Activated CD4-positive, alpha-beta T cell treated with anti-CD3 and anti-CD28 coated beads, Interleukin-2, amount 10 ng/mL, durations not matched to agents 24 days and 14 days (primary cell): ENCODE measurements at regions of chr2 and their contacts with region 1.

Region 1: DNA sequence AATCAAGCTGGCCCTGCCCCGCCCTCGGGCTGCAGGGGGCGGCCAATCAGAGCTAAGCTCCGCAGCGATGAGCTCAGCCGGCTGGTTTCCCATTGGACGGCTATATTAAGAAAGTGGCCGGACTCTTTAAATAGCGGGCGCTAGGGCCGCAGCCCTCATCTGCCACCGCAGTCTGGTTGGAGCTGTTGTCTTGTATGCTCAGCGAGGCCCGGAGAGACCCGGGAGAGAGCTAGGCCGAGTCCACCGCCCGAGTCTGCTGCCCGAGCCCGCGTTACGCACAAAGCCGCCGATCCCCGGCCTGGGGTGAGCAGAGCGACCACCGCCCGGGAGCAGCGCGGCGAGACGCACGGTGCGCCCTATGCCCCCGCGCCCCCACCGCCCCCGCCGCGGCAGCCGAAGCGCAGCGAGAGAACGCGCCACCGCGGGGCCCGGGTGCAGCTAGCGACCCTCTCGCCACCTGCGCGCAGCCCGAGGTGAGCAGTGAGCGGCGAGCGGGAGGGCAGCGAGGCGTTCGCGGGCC is at the start of gene RHOB:
- DNase-seq: peak; percentile 96
- H3K4me3 Mint-ChIP-seq: peak within 1 kb of the TSS; percentile 77
- H3K27ac Mint-ChIP-seq: peak within 1 kb of the TSS; percentile 74
- H3K4me1 Mint-ChIP-seq: peaks cover 6% of the 10 kb centered on the region
- H3K27me3 Mint-ChIP-seq: peaks cover 57% of the 10 kb centered on the region
- total RNA-seq, gene RHOB: 16.4 and 18.5 TPM in 2 replicates

Region 2: GRCh38 chr2:19347619-19348562 is 1099.1 kb before region 1 on chr2:
- intact Hi-C with region 1: loop called (anchors 5 kb)
- DNase-seq: peak; percentile 100
- H3K4me3 Mint-ChIP-seq: peak overlapping the region; percentile 93
- H3K27ac Mint-ChIP-seq: peak overlapping the region; percentile 99
- H3K4me1 Mint-ChIP-seq: peaks cover 20% of the 10 kb centered on the region
- H3K27me3 Mint-ChIP-seq: peaks cover 33% of the 10 kb centered on the region

Region 3: DNA sequence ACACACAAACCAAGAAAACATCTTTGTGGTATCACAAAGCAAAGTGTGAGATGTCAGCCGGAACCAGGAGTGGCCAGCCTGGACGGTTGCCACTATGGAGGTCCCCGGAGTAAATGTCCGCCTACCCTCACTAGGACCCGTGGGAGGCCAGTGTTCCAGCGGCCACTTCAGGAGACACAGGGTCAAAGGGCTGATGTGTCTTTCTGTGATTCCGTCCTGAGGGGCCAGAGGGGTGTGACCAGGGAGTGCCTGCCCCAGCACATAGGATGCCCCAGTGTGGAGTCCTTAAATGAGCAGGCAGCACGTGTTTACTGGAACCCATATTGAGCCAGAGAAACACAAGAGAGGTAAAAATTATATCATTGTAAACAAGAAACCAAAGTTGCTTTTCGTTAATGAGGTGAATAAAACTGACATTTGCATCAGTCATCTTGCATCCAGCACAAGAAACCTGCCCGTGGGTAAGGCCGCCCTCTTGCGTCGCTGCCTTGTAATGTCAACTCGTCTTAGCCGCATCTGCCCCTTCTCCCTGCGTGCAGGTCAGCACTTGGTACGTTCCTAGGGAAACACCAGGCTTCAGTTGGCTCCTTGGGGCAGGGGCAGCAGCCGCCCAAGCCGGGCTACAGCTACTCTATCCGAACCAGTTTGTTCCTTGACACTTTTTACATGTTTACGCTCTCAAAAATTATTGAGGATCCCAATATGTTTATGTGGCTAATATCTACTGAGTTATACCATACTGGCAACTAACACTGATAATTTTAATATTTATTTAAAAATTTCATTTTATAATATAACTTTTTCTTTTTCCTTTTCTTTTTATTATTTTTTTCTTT is 348.9 kb before region 1 on chr2:
- intact Hi-C with region 1: no loop called
- DNase-seq: peak; percentile 91
- H3K4me3 Mint-ChIP-seq: no peak overlapping the region
- H3K27ac Mint-ChIP-seq: no peak overlapping the region
- H3K4me1 Mint-ChIP-seq: peaks cover 5% of the 10 kb centered on the region
- H3K27me3 Mint-ChIP-seq: peaks cover 14% of the 10 kb centered on the region

Region 4: DNA sequence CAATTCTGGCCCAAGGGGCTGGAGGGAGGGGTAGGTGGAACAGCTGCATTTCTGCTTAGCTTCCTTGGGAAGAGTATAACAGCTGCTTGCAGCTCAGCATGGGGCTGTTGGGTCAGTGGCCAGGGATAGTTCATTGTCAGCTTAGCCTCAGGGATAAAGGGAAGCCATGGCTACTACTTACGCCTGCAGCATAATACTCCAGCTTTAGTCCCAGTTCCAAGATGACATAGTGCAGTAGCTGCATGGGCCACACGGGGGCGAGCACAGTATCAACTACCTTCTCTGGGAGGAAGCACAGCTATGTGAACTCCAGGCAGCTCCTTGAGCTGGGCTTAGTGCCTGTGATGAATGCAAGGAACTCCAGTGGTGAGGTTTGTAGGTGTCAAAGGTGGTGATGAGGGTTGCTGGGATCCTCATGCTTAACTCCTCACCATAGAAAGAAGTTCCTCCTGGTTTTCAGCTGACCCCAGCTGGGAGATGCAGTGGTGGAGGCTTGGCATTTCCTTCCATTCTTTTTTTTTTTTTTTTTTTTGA is 35.5 kb before region 1 on chr2:
- intact Hi-C with region 1: loop called (anchors 2 kb)
- DNase-seq: peak; percentile 92
- H3K4me3 Mint-ChIP-seq: no peak overlapping the region
- H3K27ac Mint-ChIP-seq: no peak overlapping the region
- H3K4me1 Mint-ChIP-seq: no peaks in the 10 kb centered on the region
- H3K27me3 Mint-ChIP-seq: peaks cover 33% of the 10 kb centered on the region

Region 5: DNA sequence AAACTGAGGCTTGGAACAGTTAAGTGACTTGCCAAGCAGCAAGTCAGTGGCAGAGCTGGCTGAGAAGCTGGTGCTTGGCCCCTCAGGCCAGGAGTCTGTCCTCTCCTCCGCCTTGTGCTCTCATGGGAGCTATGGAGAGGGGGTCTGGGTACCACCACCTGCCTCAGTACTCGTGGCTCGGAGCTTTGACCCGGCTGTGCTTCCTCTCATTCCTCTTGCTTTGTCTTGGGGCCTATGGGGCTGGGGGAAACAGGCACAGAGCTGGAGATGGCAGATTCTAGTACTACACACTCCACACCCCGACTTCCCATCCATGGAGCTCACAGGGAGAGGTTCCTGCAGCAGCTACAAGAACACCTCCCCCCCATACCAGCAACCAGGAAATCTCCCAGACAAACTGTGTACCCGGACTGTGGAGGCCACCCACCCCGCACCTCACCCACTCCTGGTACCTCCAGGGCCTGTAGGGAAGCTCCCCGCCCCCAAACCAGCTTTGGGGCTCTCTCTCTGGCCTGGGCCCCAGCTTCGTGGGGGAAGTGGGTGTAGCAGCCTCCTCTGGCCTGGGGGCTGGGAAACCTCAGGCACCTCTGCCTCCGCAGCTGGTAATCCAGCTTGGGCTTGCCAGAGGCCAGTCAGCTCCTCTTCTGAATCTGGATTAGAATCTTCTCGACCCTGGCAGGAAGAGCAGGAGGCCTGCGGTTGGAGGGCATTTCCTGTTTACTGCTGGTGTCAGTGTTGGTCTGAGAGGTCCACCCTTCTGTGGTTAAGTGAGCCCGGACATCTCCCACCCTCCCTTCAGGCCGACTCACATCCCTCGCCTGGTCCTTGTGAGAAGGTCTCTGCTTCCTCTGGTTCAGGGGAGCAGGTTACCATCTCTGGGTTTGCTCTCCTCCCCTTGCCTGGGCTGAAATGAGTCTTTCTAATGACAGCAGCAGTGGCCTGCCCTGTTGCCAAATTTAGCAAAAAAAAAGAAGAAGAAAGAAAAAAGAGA is 22.4 kb before region 1 on chr2:
- intact Hi-C with region 1: no loop called
- DNase-seq: peak; percentile 75
- H3K4me3 Mint-ChIP-seq: peak overlapping the region; percentile 7
- H3K27ac Mint-ChIP-seq: peak overlapping the region; percentile 76
- H3K4me1 Mint-ChIP-seq: peaks cover 30% of the 10 kb centered on the region
- H3K27me3 Mint-ChIP-seq: peaks cover 4% of the 10 kb centered on the region

Region 6: GRCh38 chr2:20642055-20642971 is 195.3 kb after region 1 on chr2:
- intact Hi-C with region 1: loop called (anchors 1 kb)
- DNase-seq: peak; percentile 92
- H3K4me3 Mint-ChIP-seq: no peak overlapping the region
- H3K27ac Mint-ChIP-seq: no peak overlapping the region
- H3K4me1 Mint-ChIP-seq: no peaks in the 10 kb centered on the region
- H3K27me3 Mint-ChIP-seq: no peaks in the 10 kb centered on the region

Region 7: GRCh38 chr2:20822535-20823490 is 375.8 kb after region 1 on chr2 and contains the start of gene LDAH:
- intact Hi-C with region 1: loop called (anchors 10 kb)
- DNase-seq: peak; percentile 95
- H3K4me3 Mint-ChIP-seq: peak within 1 kb of the TSS; percentile 96
- H3K27ac Mint-ChIP-seq: peak within 1 kb of the TSS; percentile 99
- H3K4me1 Mint-ChIP-seq: peaks cover 25% of the 10 kb centered on the region
- H3K27me3 Mint-ChIP-seq: peaks cover 4% of the 10 kb centered on the region
- total RNA-seq, gene LDAH: 31.6 and 37.7 TPM in 2 replicates